ENCODE measurements at regions of chr1 and their contacts with region 1.

Region 1: GRCh38 chr1:40862008-40862863 is at the start of gene CITED4:
- DNase-seq: peak; percentile 93 to 97 (median 95)
- ATAC-seq: peak; percentile 97
- H3K4me3 ChIP-seq: peak within 1 kb of the TSS; percentile 63 to 78
- H3K4me3 Mint-ChIP-seq: peak within 1 kb of the TSS; percentile 95
- H3K27ac ChIP-seq: peak within 1 kb of the TSS; percentile 67 to 74
- H3K27ac Mint-ChIP-seq: peak within 1 kb of the TSS; percentile 98
- H3K4me1 ChIP-seq: peaks cover 17% of the 10 kb centered on the region
- H3K4me1 Mint-ChIP-seq: peaks cover 14% of the 10 kb centered on the region
- H3K27me3 ChIP-seq: no peaks in the 10 kb centered on the region
- H3K27me3 Mint-ChIP-seq: no peaks in the 10 kb centered on the region
- CTCF ChIP-seq: no peak
- total RNA-seq, gene CITED4: 31.4 to 34.2 TPM

Region 2: GRCh38 chr1:40161125-40161887 is 700.9 kb before region 1 on chr1 and contains the start of gene RLF:
- CTCF ChIA-PET with region 1: no interaction called
- POLR2A ChIA-PET with region 1: no interaction called
- intact Hi-C with region 1: loop called in 1 of 2 experiments (anchors 5 kb)
- DNase-seq: peak; percentile 90 to 97 (median 94)
- ATAC-seq: peak; percentile 95
- H3K4me3 ChIP-seq: peak within 1 kb of the TSS; percentile 96 to 100
- H3K4me3 Mint-ChIP-seq: no peak within 1 kb of the TSS
- H3K27ac ChIP-seq: peak within 1 kb of the TSS; percentile 96 to 98
- H3K27ac Mint-ChIP-seq: no peak within 1 kb of the TSS
- H3K4me1 ChIP-seq: peaks cover 46% of the 10 kb centered on the region
- H3K4me1 Mint-ChIP-seq: peaks cover 22% of the 10 kb centered on the region
- H3K27me3 ChIP-seq: no peaks in the 10 kb centered on the region
- H3K27me3 Mint-ChIP-seq: no peaks in the 10 kb centered on the region
- CTCF ChIP-seq: no peak
- total RNA-seq, gene RLF: 62.2 to 62.6 TPM

Region 3: DNA sequence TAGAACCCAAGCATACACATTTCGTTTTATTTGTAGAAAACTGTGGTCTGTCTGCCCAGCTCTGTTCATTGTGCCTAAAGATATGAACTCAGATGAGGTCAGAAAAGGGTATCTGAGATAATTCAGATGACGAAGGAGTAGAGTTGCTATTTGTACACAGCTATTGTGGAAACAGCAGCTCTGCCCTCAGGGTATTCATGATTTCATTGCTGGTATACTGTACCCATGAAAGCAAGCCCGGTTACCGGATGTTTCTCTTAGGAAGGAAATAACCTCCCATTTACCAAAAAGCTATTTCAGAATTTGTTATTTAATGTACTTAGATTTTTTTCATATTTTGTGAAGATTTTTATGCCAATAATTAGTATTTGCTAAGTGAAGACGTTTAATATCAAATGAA is 450.9 kb before region 1 on chr1:
- CTCF ChIA-PET with region 1: no interaction called
- POLR2A ChIA-PET with region 1: no interaction called
- intact Hi-C with region 1: no loop called
- DNase-seq: peak in 1 of 9 experiments; percentile 39
- ATAC-seq: no peak
- H3K4me3 ChIP-seq: no peak overlapping the region
- H3K4me3 Mint-ChIP-seq: no peak overlapping the region
- H3K27ac ChIP-seq: peak overlapping the region in 1 of 2 experiments; percentile 25
- H3K27ac Mint-ChIP-seq: peak overlapping the region; percentile 60
- H3K4me1 ChIP-seq: peaks cover 34% of the 10 kb centered on the region
- H3K4me1 Mint-ChIP-seq: peaks cover 54% of the 10 kb centered on the region
- H3K27me3 ChIP-seq: no peaks in the 10 kb centered on the region
- H3K27me3 Mint-ChIP-seq: no peaks in the 10 kb centered on the region
- CTCF ChIP-seq: no peak

Region 4: GRCh38 chr1:40802078-40802741 is 60.0 kb before region 1 on chr1:
- CTCF ChIA-PET with region 1: interaction called, 3 read pairs
- POLR2A ChIA-PET with region 1: no interaction called
- intact Hi-C with region 1: loop called (anchors 1 kb)
- DNase-seq: peak; percentile 69 to 93 (median 84)
- ATAC-seq: peak; percentile 95
- H3K4me3 ChIP-seq: peak overlapping the region; percentile 51 to 87
- H3K4me3 Mint-ChIP-seq: peak overlapping the region; percentile 74
- H3K27ac ChIP-seq: peak overlapping the region; percentile 49 to 55
- H3K27ac Mint-ChIP-seq: peak overlapping the region; percentile 75
- H3K4me1 ChIP-seq: peaks cover 29% of the 10 kb centered on the region
- H3K4me1 Mint-ChIP-seq: peaks cover 30% of the 10 kb centered on the region
- H3K27me3 ChIP-seq: no peaks in the 10 kb centered on the region
- H3K27me3 Mint-ChIP-seq: no peaks in the 10 kb centered on the region
- CTCF ChIP-seq: no peak

Region 5: DNA sequence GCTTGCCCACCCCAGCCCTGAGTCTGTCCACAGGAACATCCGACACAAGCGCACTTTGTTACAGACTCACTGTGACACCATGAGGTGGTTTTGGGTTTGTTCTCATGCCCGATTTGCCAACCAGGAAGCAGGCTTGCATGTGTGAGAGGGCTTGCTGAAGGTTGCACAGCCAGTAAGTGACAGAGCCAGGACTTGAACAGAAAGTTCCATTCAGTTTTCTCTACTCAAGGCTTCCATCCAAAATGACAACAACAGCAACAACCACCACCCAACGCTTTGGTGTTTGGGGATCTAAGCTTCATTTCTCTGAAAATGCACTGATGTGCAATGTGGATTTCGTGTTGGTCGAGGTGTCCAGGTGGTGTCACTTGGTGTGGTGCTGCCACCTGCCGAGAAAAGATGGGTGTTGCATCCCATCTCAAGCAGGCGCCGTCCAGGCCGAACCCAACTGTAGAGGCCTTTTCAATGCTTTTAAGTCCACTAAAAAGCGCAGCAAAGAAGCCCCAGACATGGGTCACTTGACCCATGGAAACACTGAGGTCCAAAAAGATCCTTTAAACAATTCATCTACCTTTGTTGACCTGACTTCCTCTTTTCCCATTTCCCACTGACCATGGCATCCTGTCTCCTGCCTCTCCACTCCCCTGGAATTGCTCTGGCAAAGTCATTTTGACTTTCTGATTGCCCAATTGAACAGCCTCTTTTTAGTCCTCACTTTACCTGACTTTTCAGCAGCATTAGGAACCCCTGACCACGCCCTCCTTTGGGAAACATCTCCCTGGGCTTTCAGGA is 12.2 kb before region 1 on chr1:
- CTCF ChIA-PET with region 1: interaction called, 27 read pairs
- POLR2A ChIA-PET with region 1: interaction called, 15 read pairs
- intact Hi-C with region 1: no loop called
- DNase-seq: peak; percentile 57 to 88 (median 80)
- ATAC-seq: peak; percentile 91
- H3K4me3 ChIP-seq: peak overlapping the region; percentile 4 to 6
- H3K4me3 Mint-ChIP-seq: peak overlapping the region; percentile 55
- H3K27ac ChIP-seq: no peak overlapping the region
- H3K27ac Mint-ChIP-seq: no peak overlapping the region
- H3K4me1 ChIP-seq: peaks cover 5% of the 10 kb centered on the region
- H3K4me1 Mint-ChIP-seq: peaks cover 15% of the 10 kb centered on the region
- H3K27me3 ChIP-seq: no peaks in the 10 kb centered on the region
- H3K27me3 Mint-ChIP-seq: no peaks in the 10 kb centered on the region
- CTCF ChIP-seq: peak; percentile 76

Region 6: DNA sequence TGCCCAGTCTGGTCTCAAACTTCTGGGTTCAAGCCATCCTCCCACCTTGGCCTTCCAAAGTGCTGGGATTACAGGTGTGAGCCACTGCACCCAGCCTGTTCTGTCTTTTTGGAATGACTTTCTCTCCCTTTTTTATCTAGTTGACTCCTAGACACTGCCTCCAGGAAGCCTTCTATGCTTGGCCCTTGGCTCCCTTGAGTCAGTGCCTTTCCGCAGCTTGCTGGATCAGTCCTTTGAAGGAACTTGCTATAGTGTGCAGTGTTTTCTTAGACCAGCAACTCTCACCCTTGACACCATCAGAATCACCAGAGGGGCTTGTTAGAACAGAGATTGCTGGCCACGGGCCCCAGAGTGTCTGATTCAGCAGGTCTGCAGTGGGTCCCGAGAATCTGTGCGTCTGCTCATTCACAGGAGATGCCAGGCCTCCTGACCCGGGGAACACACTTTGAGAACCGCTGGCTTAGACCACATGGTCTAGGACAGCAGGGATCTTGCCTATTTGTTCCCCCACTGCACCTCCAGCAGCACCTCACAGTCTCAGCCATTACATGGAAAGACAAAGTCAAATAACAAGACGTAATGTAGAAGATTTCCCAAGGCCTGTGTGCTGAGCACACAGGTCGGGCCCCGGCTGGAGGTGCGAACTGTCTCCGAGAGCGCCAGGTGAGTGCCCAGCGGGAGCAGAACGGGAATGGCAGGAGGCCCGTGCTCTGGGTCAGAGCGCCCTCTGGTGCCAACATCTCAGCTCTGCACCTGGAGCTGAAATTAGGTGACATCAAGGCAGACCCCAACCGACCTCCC is 89.9 kb after region 1 on chr1:
- CTCF ChIA-PET with region 1: interaction called, 5 read pairs
- POLR2A ChIA-PET with region 1: no interaction called
- intact Hi-C with region 1: loop called in 1 of 2 experiments (anchors 5 kb)
- DNase-seq: peak; percentile 25 to 71 (median 61)
- ATAC-seq: peak; percentile 64
- H3K4me3 ChIP-seq: no peak overlapping the region
- H3K4me3 Mint-ChIP-seq: no peak overlapping the region
- H3K27ac ChIP-seq: no peak overlapping the region
- H3K27ac Mint-ChIP-seq: no peak overlapping the region
- H3K4me1 ChIP-seq: no peaks in the 10 kb centered on the region
- H3K4me1 Mint-ChIP-seq: peaks cover 5% of the 10 kb centered on the region
- H3K27me3 ChIP-seq: no peaks in the 10 kb centered on the region
- H3K27me3 Mint-ChIP-seq: peaks cover 30% of the 10 kb centered on the region
- CTCF ChIP-seq: peak; percentile 88

Region 7: GRCh38 chr1:41003640-41004220 is 141.5 kb after region 1 on chr1:
- CTCF ChIA-PET with region 1: interaction called, 5 read pairs
- POLR2A ChIA-PET with region 1: interaction called, 8 read pairs
- intact Hi-C with region 1: loop called in 1 of 2 experiments (anchors 1 kb)
- DNase-seq: peak; percentile 71 to 94 (median 90)
- ATAC-seq: peak; percentile 98
- H3K4me3 ChIP-seq: no peak overlapping the region
- H3K4me3 Mint-ChIP-seq: no peak overlapping the region
- H3K27ac ChIP-seq: peak overlapping the region in 1 of 2 experiments; percentile 51
- H3K27ac Mint-ChIP-seq: peak overlapping the region; percentile 23
- H3K4me1 ChIP-seq: peaks cover 15% of the 10 kb centered on the region
- H3K4me1 Mint-ChIP-seq: peaks cover 20% of the 10 kb centered on the region
- H3K27me3 ChIP-seq: no peaks in the 10 kb centered on the region
- H3K27me3 Mint-ChIP-seq: no peaks in the 10 kb centered on the region
- CTCF ChIP-seq: peak; percentile 33